Sigmoid colon (tissue), 7 donors: ENCODE measurements at regions of chr2 and their contacts with region 1.

Region 1: GRCh38 chr2:227766373-227766883 is 20.7 kb downstream of the SCYGR8 start:
- DNase-seq: peak; percentile 87
- H3K4me3 ChIP-seq: no peak overlapping the region
- H3K27ac ChIP-seq: no peak overlapping the region
- H3K4me1 ChIP-seq: peaks cover 0 to 5% (median 2%) of the 10 kb centered on the region in 4 donors
- H3K27me3 ChIP-seq: no peaks in the 10 kb centered on the region
- CTCF ChIP-seq: peak; percentile 72 to 84 (median 78)
- EP300 ChIP-seq: no peak
- POLR2A ChIP-seq: no peak

Region 2: GRCh38 chr2:227406177-227407031 is 360.0 kb before region 1 on chr2:
- intact Hi-C with region 1: loop called (anchors 2 kb)
- DNase-seq: peak; percentile 68
- H3K4me3 ChIP-seq: no peak overlapping the region
- H3K27ac ChIP-seq: peak overlapping the region; percentile 53 to 76 (median 56)
- H3K4me1 ChIP-seq: peaks cover 0 to 16% (median 11%) of the 10 kb centered on the region in 4 donors
- H3K27me3 ChIP-seq: no peaks in the 10 kb centered on the region
- CTCF ChIP-seq: peak in 3 of 4 experiments; percentile 43 to 52 (median 47)
- EP300 ChIP-seq: no peak
- POLR2A ChIP-seq: no peak

Region 3: DNA sequence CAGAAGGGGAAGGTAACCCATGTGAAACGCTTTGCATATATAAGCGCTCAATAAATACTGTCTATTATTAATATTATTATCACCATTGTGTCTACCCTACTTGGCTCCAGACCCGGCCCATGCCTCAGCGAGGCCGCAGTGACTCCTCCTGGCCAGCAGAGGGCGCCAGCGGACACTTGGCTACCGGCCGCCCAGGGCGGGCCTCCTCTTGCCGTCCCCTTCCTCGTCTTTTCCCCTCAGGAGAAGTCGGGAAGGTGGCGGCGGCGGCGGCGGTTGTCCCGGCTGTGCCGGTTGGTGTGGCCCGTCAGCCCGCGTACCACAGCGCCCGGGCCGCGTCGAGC is 294.5 kb before region 1 on chr2 and contains the start of gene AGFG1:
- intact Hi-C with region 1: loop called (anchors 5 kb)
- DNase-seq: peak; percentile 89
- H3K4me3 ChIP-seq: peak within 1 kb of the TSS; percentile 87 to 99 (median 98)
- H3K27ac ChIP-seq: peak within 1 kb of the TSS; percentile 92 to 94 (median 94)
- H3K4me1 ChIP-seq: peaks cover 0 to 34% (median 24%) of the 10 kb centered on the region in 4 donors
- H3K27me3 ChIP-seq: no peaks in the 10 kb centered on the region
- CTCF ChIP-seq: peak; percentile 80 to 97 (median 92)
- EP300 ChIP-seq: no peak
- POLR2A ChIP-seq: no peak
- total RNA-seq, gene AGFG1: 41.8 to 53.9 (median 44.1) TPM

Region 4: GRCh38 chr2:227655454-227655853 is 111.0 kb before region 1 on chr2:
- intact Hi-C with region 1: loop called (anchors 1 kb)
- DNase-seq: no peak
- H3K4me3 ChIP-seq: no peak overlapping the region
- H3K27ac ChIP-seq: peak overlapping the region in 1 of 4 donors; percentile 30
- H3K4me1 ChIP-seq: no peaks in the 10 kb centered on the region
- H3K27me3 ChIP-seq: no peaks in the 10 kb centered on the region
- CTCF ChIP-seq: no peak
- EP300 ChIP-seq: no peak
- POLR2A ChIP-seq: no peak

Region 5: DNA sequence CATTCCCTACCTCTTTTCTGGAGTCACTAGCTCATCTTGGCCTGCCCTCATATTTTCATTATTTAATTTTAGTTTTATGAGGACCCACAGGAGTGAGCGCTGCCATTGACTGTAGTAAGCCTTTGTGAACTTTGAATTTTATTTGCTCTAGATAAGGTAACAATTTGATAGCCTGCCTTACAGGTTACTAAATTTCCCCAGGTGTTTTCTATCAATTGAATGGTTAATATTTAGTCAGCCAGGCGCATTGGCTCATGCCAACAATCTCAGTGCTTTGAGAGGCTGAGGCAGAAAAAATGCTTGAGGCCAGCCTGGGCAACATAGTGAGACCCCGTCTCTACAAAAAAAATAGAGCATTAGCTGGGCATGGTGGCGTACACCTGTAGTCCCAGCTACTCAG is 155.2 kb after region 1 on chr2:
- intact Hi-C with region 1: no loop called
- DNase-seq: no peak
- H3K4me3 ChIP-seq: no peak overlapping the region
- H3K27ac ChIP-seq: no peak overlapping the region
- H3K4me1 ChIP-seq: no peaks in the 10 kb centered on the region
- H3K27me3 ChIP-seq: no peaks in the 10 kb centered on the region
- CTCF ChIP-seq: no peak
- EP300 ChIP-seq: no peak
- POLR2A ChIP-seq: no peak